Right ventricle myocardium superior (tissue), 1 donor: ENCODE measurements at regions of chr1 and their contacts with region 1.

Region 1: DNA sequence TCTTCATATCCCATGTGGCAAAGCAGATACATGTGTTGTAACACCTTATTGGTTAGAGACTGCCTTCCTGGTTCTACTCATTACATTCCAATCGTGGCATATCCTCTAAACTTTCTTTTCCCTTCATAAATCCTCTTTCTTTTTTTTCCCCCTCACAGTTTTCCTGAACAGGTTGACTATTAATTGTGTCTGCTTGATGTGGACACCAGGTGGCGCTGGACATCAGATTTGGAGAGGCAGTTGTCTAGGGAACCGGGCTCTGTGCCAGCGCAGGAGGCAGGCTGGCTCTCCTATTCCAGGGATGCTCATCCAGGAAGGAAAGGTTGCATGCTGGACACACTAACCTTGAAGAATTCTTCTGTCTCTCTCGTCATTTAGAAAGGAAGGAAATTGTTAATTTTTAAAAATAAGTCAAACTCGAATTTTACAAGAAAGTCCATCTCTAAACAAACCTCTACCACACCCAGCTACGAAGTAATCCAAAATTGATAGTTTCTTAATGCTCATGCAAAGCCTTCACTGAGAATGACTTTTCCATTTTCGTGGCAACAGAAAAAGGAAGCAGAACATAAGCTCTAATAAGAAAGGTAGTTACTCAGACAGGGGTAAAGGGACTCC is 59.4 kb upstream of the ASB17 start:
- DNase-seq: peak; percentile 91
- ATAC-seq: peak; percentile 69

Region 2: GRCh38 chr1:75559136-75559535 is 432.5 kb before region 1 on chr1:
- intact Hi-C with region 1: no loop called
- DNase-seq: no peak
- ATAC-seq: no peak

Region 3: DNA sequence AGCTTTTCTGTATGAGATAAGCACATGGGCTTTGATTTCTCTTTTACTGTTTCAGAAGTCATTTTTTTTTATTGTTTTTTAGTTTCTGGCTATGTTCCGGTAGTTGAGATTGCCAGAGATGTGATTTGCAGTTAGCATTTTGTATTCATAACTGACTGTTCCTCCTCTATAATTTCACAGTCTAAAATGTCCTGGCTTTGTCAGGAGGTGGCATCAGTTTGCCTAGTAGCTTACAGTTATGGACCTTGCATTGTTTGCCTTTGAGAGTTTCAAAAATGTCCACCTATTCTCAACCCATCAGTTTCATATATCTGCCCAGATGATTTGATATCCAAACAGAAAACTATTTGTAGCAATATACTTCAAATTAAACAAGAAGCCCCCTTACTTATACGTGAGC is 43.4 kb after region 1 on chr1:
- intact Hi-C with region 1: no loop called
- DNase-seq: no peak
- ATAC-seq: no peak

Region 4: DNA sequence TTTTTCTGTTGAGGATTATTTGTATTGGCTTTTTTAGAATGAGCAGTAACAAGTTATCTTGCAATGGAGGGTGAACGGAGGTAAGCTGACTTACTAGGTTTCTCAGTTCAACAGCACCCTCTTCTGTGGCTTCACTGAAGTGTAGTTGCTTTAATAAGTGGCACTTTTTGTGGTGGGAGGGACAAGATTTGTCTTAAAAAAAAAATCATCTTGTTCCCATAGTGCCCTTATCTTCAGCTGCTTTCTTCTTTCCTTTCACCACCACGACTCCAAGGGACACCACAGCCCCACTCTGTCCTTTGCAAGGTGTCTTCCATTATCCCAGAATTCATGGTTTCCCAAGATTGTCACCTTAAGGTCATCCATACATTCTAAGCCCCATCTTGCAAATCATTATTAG is 1134.7 kb after region 1 on chr1:
- intact Hi-C with region 1: loop called (anchors 5 kb)
- DNase-seq: no peak
- ATAC-seq: no peak